Activated CD8-positive, alpha-beta T cell treated with anti-CD3 and anti-CD28 coated beads, Interleukin-2, amount 10 ng/mL, durations not matched to agents 7 days and 5 days (primary cell): ENCODE measurements at regions of chr14 and their contacts with region 1.

Region 1: DNA sequence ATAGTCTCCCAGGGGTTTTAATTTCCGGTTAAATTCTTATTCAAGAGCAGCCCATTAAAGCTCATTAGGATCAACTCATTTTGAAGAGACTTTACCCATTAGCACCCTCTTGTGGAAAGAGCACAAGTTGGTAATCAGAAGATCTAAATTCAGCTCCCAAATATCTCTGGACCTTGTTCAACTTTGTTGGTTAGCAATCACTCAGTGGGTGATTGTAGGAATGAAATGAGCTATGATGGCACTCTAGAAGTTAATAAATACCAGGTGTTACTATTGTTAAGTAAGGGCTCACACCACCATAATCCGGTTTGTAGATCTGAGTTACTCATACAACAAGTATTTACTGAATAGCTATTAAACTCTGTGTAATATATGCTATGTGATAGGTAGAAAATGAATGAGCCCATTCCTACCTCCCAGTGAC is 42.9 kb downstream of the TRIP11 start:
- DNase-seq: no peak
- ATAC-seq: peak; percentile 60
- H3K4me3 Mint-ChIP-seq: no peak overlapping the region
- H3K27ac Mint-ChIP-seq: no peak overlapping the region
- H3K4me1 Mint-ChIP-seq: peaks cover 39% of the 10 kb centered on the region
- H3K27me3 Mint-ChIP-seq: no peaks in the 10 kb centered on the region

Region 2: GRCh38 chr14:91649930-91650329 is 347.0 kb before region 1 on chr14:
- CTCF ChIA-PET with region 1: interaction called, 20 read pairs
- POLR2A ChIA-PET with region 1: no interaction called
- DNase-seq: peak; percentile 55
- ATAC-seq: no peak
- H3K4me3 Mint-ChIP-seq: no peak overlapping the region
- H3K27ac Mint-ChIP-seq: no peak overlapping the region
- H3K4me1 Mint-ChIP-seq: peaks cover 13% of the 10 kb centered on the region
- H3K27me3 Mint-ChIP-seq: peaks cover 2% of the 10 kb centered on the region

Region 3: GRCh38 chr14:91893007-91893406 is 104.0 kb before region 1 on chr14:
- CTCF ChIA-PET with region 1: interaction called, 11 read pairs
- POLR2A ChIA-PET with region 1: no interaction called
- DNase-seq: no peak
- ATAC-seq: no peak
- H3K4me3 Mint-ChIP-seq: no peak overlapping the region
- H3K27ac Mint-ChIP-seq: peak overlapping the region; percentile 53
- H3K4me1 Mint-ChIP-seq: peaks cover 58% of the 10 kb centered on the region
- H3K27me3 Mint-ChIP-seq: peaks cover 3% of the 10 kb centered on the region

Region 4: DNA sequence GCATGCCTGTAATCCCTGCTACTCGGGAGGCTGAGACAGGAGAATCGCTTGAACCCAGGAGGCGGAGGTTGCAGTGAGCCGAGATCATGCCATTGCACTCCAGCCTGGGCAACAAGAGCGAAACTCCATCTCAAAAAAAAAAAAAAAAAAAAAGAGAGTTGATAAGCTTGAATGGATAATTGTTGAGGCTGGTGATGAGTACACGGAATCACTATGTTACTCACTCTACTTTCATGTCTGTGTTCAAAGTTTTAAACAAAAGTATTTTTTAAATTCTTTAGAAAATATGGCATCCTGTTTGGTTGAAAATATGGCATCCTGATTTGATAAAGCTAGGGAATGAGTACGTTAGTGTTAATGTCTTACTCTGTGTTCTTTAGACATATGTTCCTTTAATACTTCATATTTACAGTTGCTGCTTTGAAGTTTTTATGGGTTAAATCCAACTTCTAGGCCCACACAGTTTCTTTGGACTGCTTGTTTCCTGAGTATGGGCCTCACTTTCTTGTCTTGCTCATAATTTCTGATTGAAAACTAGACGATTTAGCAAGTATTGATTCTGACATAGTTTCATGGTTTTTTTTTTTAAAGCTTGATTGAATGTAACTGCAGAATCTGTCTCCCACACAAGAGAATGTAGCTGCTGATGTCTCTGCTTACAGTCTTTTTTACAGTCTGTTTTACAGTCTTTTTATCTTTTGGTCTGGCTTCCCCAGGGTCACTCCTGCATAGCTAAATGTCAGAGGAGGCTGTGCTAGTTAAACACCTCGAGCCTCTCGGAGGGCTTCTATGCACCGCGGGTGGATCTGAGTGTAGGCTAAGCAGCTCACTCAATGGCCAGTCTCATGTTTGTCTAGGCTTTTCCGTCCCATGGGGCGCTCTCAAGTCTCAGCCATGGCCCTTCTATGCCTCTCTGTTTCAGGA is 35.4 kb before region 1 on chr14:
- CTCF ChIA-PET with region 1: interaction called, 11 read pairs
- POLR2A ChIA-PET with region 1: interaction called, 3 read pairs
- DNase-seq: no peak
- ATAC-seq: no peak
- H3K4me3 Mint-ChIP-seq: no peak overlapping the region
- H3K27ac Mint-ChIP-seq: no peak overlapping the region
- H3K4me1 Mint-ChIP-seq: no peaks in the 10 kb centered on the region
- H3K27me3 Mint-ChIP-seq: peaks cover 7% of the 10 kb centered on the region

Region 5: DNA sequence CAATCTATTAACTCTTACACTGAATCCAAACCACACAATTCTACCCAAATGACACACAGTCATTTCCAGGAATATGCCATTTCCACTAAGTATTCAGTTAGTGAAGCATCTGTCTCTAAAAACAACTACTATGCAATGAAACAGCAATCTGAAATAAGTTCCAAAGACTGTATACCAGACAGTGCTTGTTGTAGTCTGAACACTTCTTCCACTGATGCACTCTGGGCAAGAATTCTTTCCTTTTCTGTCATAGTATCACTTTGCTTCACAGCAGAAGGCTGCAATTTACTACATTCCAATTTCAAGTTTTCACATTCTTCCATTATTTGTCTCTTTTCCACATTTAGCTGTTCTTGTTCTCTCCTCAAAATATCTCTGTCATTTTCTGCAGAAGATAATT is 17.1 kb after region 1 on chr14:
- CTCF ChIA-PET with region 1: interaction called, 45 read pairs
- POLR2A ChIA-PET with region 1: no interaction called
- DNase-seq: no peak
- ATAC-seq: no peak
- H3K4me3 Mint-ChIP-seq: no peak overlapping the region
- H3K27ac Mint-ChIP-seq: no peak overlapping the region
- H3K4me1 Mint-ChIP-seq: no peaks in the 10 kb centered on the region
- H3K27me3 Mint-ChIP-seq: no peaks in the 10 kb centered on the region

Region 6: GRCh38 chr14:92106143-92106926 is 109.4 kb after region 1 on chr14 and contains the start of gene ATXN3:
- CTCF ChIA-PET with region 1: interaction called, 22 read pairs
- POLR2A ChIA-PET with region 1: no interaction called
- DNase-seq: peak; percentile 97
- ATAC-seq: peak; percentile 96
- H3K4me3 Mint-ChIP-seq: peak within 1 kb of the TSS; percentile 87
- H3K27ac Mint-ChIP-seq: peak within 1 kb of the TSS; percentile 89
- H3K4me1 Mint-ChIP-seq: peaks cover 33% of the 10 kb centered on the region
- H3K27me3 Mint-ChIP-seq: no peaks in the 10 kb centered on the region
- total RNA-seq, gene ATXN3: 25.8 to 26.0 TPM